MCF 10A (cell line): ENCODE measurements at regions of chr13 and their contacts with region 1.

Region 1: GRCh38 chr13:93690139-93690538 is 463.5 kb downstream of the GPC6 start:
- DNase-seq: peak; percentile 50
- H3K4me3 Mint-ChIP-seq: no peak overlapping the region
- H3K27ac Mint-ChIP-seq: no peak overlapping the region
- H3K4me1 Mint-ChIP-seq: no peaks in the 10 kb centered on the region
- H3K27me3 Mint-ChIP-seq: no peaks in the 10 kb centered on the region
- CTCF ChIP-seq: no peak

Region 2: DNA sequence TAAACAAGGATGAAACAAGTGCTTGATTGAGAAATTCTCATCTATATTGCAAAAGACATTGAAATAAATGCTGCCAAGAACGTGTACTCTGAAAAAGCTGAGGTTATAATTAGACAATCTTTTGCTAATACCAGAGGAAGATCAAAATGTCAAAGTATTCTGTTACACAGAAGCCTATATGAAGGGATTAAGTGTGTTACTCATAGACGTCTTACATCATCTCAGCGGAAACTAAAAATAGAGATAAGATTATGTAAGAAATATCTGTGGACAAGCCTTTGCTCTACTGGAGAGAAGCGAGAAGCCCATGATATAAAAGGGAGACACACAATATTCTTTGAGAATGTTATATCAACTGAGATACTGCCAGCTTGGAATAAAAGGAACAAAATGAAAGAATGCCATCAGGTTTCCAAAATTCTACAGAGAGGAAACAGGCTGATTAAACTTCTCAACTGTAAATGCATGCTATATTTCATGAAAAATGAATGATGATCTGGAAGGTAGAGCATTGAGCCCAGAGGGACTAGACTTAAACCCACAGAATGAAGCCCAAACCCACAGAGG is 1592.7 kb before region 1 on chr13:
- CTCF ChIA-PET with region 1: no interaction called
- POLR2A ChIA-PET with region 1: no interaction called
- intact Hi-C with region 1: no loop called
- DNase-seq: peak; percentile 61
- H3K4me3 Mint-ChIP-seq: no peak overlapping the region
- H3K27ac Mint-ChIP-seq: no peak overlapping the region
- H3K4me1 Mint-ChIP-seq: no peaks in the 10 kb centered on the region
- H3K27me3 Mint-ChIP-seq: peaks cover 34% of the 10 kb centered on the region
- CTCF ChIP-seq: no peak

Region 3: DNA sequence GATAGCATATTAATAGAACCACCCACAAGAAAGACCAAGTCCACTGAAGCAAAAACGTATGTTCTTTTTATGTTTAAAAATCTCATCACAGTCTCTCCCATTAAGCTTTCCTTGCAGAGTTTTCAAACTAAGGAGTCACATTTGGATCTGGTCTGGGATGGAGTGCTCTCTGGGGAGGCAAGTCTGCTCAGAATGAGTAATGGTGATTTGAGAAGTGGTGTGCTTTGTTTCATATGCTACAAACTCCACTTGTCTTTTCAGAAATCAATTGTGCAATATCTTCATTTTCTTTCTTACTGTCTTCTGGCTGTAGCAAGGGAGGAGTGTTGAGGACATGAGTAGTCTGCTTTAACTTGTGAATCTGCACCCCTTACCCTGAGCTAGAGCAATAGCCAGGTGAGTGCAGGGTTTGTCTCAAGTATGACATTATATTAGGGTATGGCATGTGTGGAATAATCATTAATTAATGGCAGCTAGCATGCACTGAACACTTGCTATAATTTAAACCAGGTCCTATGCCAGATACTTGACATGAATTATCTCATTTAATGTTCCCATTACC is 291.9 kb before region 1 on chr13:
- CTCF ChIA-PET with region 1: no interaction called
- POLR2A ChIA-PET with region 1: no interaction called
- intact Hi-C with region 1: no loop called
- DNase-seq: no peak
- H3K4me3 Mint-ChIP-seq: no peak overlapping the region
- H3K27ac Mint-ChIP-seq: no peak overlapping the region
- H3K4me1 Mint-ChIP-seq: no peaks in the 10 kb centered on the region
- H3K27me3 Mint-ChIP-seq: no peaks in the 10 kb centered on the region
- CTCF ChIP-seq: no peak

Region 4: DNA sequence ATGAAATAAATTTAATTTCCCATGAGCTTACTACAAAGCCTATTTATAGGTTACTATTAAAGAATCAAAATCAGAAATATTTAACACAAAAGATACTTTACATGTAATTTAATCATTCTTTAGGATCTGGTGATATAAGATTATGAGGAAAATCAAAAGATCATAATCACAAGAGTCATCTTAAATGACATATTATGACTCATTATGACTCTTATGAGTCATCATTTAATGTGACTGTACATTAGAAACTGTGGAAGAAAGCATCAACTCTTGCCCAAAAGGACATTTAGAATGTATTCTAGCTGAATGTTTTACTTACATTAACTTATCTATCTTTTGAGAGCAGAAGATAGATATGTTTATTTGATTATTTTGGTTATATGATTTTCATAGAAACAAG is 330.7 kb after region 1 on chr13:
- CTCF ChIA-PET with region 1: no interaction called
- POLR2A ChIA-PET with region 1: no interaction called
- intact Hi-C with region 1: loop called (anchors 5 kb)
- DNase-seq: peak; percentile 53
- H3K4me3 Mint-ChIP-seq: no peak overlapping the region
- H3K27ac Mint-ChIP-seq: no peak overlapping the region
- H3K4me1 Mint-ChIP-seq: peaks cover 5% of the 10 kb centered on the region
- H3K27me3 Mint-ChIP-seq: no peaks in the 10 kb centered on the region
- CTCF ChIP-seq: no peak